ENCODE measurements at regions of chr9 and their contacts with region 1.

Region 1: DNA sequence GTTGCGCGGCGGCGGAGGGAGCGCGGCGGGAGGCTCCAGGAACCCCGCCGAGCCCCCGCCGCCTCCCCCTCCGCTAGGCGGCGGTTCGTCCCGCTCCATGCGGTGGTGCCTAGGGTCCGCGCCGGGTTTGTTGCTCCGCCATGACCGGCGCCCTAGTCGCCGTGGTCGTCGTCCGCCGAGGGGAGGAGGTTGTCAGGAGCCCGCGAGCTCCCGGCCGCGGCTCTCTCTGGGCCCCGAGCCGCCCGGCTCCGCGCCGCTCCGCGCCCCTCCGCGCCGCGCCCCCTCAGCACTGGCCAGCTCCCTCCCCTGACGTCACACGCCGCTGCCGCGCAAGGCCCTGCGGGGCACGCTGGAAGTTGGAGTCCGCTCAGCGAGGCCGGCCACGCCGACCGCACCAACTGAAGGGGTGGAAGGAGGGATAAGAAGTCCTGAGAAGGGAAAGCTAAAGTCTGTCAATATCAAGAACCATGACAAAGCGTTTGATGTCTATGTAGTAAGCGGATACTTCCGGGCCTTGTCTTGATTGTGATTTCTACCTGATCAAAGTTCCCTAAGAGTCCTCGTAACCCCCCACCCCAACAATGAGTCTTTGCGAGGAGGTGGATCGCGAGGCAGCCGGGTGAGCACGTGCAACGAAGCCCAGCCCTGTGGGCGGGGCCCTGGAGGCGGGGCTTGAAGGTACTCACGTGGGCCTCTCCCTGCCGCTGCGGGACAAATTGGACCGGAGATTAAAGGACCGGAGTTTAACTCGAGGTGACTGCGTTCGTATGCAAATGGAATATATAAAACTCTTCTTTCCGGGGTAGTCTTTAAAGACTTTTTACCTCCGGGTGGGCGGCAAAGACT is at the start of gene NR6A1:
- DNase-seq: peak; percentile 96
- total RNA-seq, gene NR6A1: 7.8 and 8.0 TPM in 2 replicates

Region 2: DNA sequence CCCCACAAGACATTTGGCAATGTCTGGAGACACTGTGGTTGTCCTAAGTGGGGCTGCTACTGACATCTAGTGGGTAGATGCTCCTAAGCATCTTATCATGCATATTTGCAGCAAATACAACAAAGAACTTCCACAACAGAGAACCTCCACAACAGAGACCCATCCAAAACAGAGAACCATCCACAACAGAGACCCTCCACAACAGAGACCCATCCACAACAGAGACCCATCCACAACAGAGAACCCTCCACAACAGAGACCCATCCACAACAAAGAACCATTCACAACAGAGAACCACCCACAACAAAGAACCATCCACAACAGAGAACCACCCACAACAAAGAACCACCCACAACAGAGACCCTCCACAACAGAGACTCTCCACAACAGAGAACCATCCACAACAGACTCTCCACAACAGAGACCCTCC is 123.5 kb after region 1 on chr9:
- in situ Hi-C with region 1: loop called (anchors 25 kb)
- DNase-seq: peak; percentile 74